ENCODE measurements at regions of chr17 and their contacts with region 1.

Region 1: GRCh38 chr17:13337864-13338371 is 263.8 kb downstream of the HS3ST3A1 start:
- DNase-seq: peak; percentile 39
- ATAC-seq: peak; percentile 58; the same call in 1 of the 2 replicates
- H3K4me3 ChIP-seq: peak overlapping the region; percentile 22 to 40
- H3K27ac ChIP-seq: no peak overlapping the region
- H3K4me1 ChIP-seq: no peaks in the 10 kb centered on the region
- H3K27me3 ChIP-seq: no peaks in the 10 kb centered on the region; the same call in 1 of the 2 replicates
- CTCF ChIP-seq: peak; percentile 80

Region 2: GRCh38 chr17:13353590-13353989 is 15.7 kb after region 1 on chr17:
- CTCF ChIA-PET with region 1: no interaction called
- POLR2A ChIA-PET with region 1: no interaction called
- in situ Hi-C with region 1: no loop called
- intact Hi-C with region 1: no loop called
- DNase-seq: no peak
- ATAC-seq: no peak
- H3K4me3 ChIP-seq: no peak overlapping the region
- H3K27ac ChIP-seq: no peak overlapping the region
- H3K4me1 ChIP-seq: no peaks in the 10 kb centered on the region
- H3K27me3 ChIP-seq: no peaks in the 10 kb centered on the region
- CTCF ChIP-seq: no peak

Region 3: GRCh38 chr17:14135906-14136590 is 798.1 kb after region 1 on chr17:
- CTCF ChIA-PET with region 1: interaction called, 11 read pairs
- POLR2A ChIA-PET with region 1: no interaction called
- in situ Hi-C with region 1: no loop called
- intact Hi-C with region 1: no loop called
- DNase-seq: no peak
- ATAC-seq: no peak
- H3K4me3 ChIP-seq: no peak overlapping the region
- H3K27ac ChIP-seq: no peak overlapping the region
- H3K4me1 ChIP-seq: no peaks in the 10 kb centered on the region
- H3K27me3 ChIP-seq: no peaks in the 10 kb centered on the region
- CTCF ChIP-seq: no peak

Measured in Panc1 (cell line).